CD4-positive, alpha-beta memory T cell (primary cell): ENCODE measurements at regions of chr12 and their contacts with region 1.

Region 1: DNA sequence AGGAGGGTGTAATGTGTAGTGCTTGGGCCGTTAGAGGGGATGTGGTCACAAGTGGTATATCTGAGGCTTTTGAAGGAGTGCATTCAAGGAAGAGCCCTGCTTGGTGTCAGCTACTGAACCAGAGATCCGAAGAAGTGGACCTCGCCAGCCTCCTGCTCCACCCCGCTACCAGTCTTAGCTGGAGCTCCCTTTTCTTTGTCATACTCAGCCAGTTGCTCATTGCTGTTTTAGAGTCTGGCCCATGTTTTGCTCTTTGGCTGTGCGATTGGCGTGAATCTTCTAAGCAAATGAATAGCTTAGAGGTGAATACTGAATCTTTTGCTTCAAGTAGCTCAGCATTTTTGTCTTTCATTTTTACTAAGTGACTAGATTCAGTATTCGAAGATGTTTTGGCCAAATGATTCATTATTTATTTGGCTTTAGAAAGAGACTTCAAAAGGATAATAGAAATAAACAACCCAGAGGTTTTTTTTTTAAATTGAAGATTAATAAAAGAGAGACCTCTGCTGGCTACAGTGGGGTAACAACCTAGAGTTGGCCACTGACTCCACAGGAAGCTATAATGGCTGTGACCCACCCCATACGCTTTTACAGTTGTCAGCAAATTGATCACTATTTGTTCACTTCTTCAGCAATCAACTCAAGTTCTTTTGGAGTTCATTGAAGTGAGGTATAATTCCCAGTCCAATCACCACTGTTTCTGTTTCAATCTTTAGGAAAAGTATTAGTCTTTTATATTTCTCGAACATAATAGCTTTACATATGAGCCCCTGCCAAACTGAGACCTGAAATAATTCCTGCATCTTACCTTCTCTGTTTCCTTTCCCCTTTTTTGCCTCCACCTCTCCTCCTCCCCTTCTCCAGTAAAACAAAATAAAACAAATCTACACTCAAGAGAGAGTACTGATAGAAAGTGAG is 19.9 kb downstream of the CDKN1B start:
- DNase-seq: peak; percentile 61 to 70 (median 64)
- H3K4me3 ChIP-seq: peak overlapping the region in 1 of 2 donors; percentile 46
- H3K4me3 Mint-ChIP-seq: peak overlapping the region; percentile 67 to 88 (median 76)
- H3K27ac ChIP-seq: peak overlapping the region; percentile 76
- H3K27ac Mint-ChIP-seq: peak overlapping the region; percentile 88 to 93 (median 93)
- H3K4me1 ChIP-seq: peaks cover 55% of the 10 kb centered on the region
- H3K4me1 Mint-ChIP-seq: peaks cover 24 to 59% (median 41%) of the 10 kb centered on the region in 4 donors
- H3K27me3 ChIP-seq: no peaks in the 10 kb centered on the region
- H3K27me3 Mint-ChIP-seq: no peaks in the 10 kb centered on the region

Region 2: DNA sequence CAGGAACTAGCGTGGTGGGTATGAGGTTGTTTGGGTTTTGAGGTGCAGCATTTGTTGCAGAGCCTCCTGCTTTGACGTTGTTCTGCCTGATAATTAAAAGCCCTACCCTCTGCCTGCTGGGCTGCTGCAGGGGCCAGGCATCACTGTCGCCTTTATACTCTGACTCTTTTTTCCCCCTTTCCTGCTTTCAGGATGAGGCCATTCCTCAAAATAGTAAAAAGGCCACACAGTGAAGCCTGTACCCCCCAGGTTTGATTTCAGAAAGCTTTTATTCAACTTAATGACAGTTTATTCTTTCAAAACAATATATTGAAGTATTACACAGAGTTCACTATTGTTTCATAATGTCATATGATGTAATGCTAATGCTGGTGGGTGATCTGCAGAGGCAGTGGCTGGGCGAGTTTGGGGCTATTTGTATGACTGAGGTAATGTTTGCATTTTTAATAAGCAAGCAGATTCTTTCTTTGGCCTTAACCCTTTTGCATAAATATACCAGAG is 371.0 kb before region 1 on chr12:
- CTCF ChIA-PET with region 1: interaction called, 16 read pairs
- POLR2A ChIA-PET with region 1: interaction called, 86 read pairs
- intact Hi-C with region 1: no loop called
- DNase-seq: no peak
- H3K4me3 ChIP-seq: no peak overlapping the region
- H3K4me3 Mint-ChIP-seq: peak overlapping the region in 5 of 8 donors; percentile 9 to 21 (median 14)
- H3K27ac ChIP-seq: no peak overlapping the region
- H3K27ac Mint-ChIP-seq: peak overlapping the region in 4 of 7 donors; percentile 31 to 75 (median 45)
- H3K4me1 ChIP-seq: peaks cover 39% of the 10 kb centered on the region
- H3K4me1 Mint-ChIP-seq: peaks cover 45 to 56% (median 50%) of the 10 kb centered on the region in 4 donors
- H3K27me3 ChIP-seq: no peaks in the 10 kb centered on the region
- H3K27me3 Mint-ChIP-seq: no peaks in the 10 kb centered on the region

Region 3: DNA sequence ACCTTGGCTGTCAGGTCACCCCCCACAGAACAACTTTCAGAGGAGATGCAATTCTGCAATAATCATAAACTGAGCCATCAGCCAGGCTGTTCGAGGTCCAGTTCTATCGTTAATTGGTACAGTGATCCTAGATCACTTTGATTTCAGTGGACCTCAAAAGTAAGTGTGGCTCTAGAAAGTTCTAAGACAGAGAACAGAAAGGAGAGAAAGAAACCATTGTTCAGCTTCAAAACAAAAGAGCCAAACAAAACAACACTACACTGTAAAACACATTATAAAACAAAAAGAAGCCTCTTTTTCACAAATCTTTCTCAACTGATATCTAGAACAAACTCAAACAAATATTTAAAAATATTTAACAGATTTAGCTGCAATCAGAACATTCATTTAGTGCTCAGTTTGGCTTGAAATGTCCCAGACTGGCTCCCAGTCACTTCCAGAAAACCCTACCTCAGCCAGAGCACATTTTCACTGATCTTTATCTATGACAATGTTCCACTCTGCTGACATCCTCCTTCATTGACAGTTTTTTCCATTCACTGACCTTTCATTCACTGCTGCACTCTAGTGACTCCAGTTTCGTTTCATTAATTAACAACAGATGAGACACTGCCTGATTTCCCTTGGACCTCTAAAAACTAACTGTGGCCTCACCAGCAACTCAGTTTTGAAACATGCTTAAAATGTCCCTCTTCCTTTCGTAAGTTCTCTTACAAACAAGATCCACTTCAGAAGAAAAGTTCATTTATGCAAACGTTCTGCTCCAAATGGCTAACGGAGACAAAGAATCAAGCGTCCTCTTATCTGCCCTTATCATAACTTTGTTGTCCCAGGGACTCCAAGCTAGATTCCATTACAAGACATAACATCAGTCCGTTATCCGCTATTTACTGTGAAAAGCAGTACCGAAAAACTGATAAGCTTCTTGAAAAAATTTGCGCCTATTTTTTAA is 231.2 kb before region 1 on chr12:
- CTCF ChIA-PET with region 1: interaction called, 16 read pairs
- POLR2A ChIA-PET with region 1: interaction called, 7 read pairs
- intact Hi-C with region 1: loop called (anchors 2 kb)
- DNase-seq: peak in 4 of 5 donors; percentile 28 to 42 (median 32)
- H3K4me3 ChIP-seq: no peak overlapping the region
- H3K4me3 Mint-ChIP-seq: peak overlapping the region in 7 of 8 donors; percentile 37 to 84 (median 73)
- H3K27ac ChIP-seq: peak overlapping the region; percentile 48
- H3K27ac Mint-ChIP-seq: peak overlapping the region; percentile 66 to 95 (median 90)
- H3K4me1 ChIP-seq: peaks cover 65% of the 10 kb centered on the region
- H3K4me1 Mint-ChIP-seq: peaks cover 53 to 77% (median 61%) of the 10 kb centered on the region in 4 donors
- H3K27me3 ChIP-seq: no peaks in the 10 kb centered on the region
- H3K27me3 Mint-ChIP-seq: no peaks in the 10 kb centered on the region

Region 4: GRCh38 chr12:12622418-12622817 is 114.6 kb before region 1 on chr12:
- CTCF ChIA-PET with region 1: interaction called, 10 read pairs
- POLR2A ChIA-PET with region 1: interaction called, 7 read pairs
- intact Hi-C with region 1: no loop called
- DNase-seq: peak; percentile 42 to 81 (median 71)
- H3K4me3 ChIP-seq: peak overlapping the region; percentile 9 to 21
- H3K4me3 Mint-ChIP-seq: peak overlapping the region; percentile 56 to 84 (median 72)
- H3K27ac ChIP-seq: peak overlapping the region; percentile 36
- H3K27ac Mint-ChIP-seq: peak overlapping the region; percentile 74 to 95 (median 90)
- H3K4me1 ChIP-seq: peaks cover 87% of the 10 kb centered on the region
- H3K4me1 Mint-ChIP-seq: peaks cover 62 to 100% (median 74%) of the 10 kb centered on the region in 4 donors
- H3K27me3 ChIP-seq: no peaks in the 10 kb centered on the region
- H3K27me3 Mint-ChIP-seq: no peaks in the 10 kb centered on the region

Region 5: GRCh38 chr12:12696562-12697383 is 40.2 kb before region 1 on chr12:
- CTCF ChIA-PET with region 1: interaction called, 28 read pairs
- POLR2A ChIA-PET with region 1: interaction called, 45 read pairs
- intact Hi-C with region 1: loop called (anchors 1 kb)
- DNase-seq: peak; percentile 93 to 96 (median 95)
- H3K4me3 ChIP-seq: peak overlapping the region; percentile 37 to 74
- H3K4me3 Mint-ChIP-seq: peak overlapping the region; percentile 86 to 97 (median 94)
- H3K27ac ChIP-seq: peak overlapping the region; percentile 87
- H3K27ac Mint-ChIP-seq: peak overlapping the region; percentile 98 to 100 (median 100)
- H3K4me1 ChIP-seq: peaks cover 24% of the 10 kb centered on the region
- H3K4me1 Mint-ChIP-seq: peaks cover 16 to 41% (median 30%) of the 10 kb centered on the region in 4 donors
- H3K27me3 ChIP-seq: no peaks in the 10 kb centered on the region
- H3K27me3 Mint-ChIP-seq: no peaks in the 10 kb centered on the region

Region 6: GRCh38 chr12:12724661-12725545 is 12.1 kb before region 1 on chr12:
- CTCF ChIA-PET with region 1: interaction called, 104 read pairs
- POLR2A ChIA-PET with region 1: interaction called, 643 read pairs
- intact Hi-C with region 1: loop called (anchors 1 kb)
- DNase-seq: peak; percentile 93 to 97 (median 96)
- H3K4me3 ChIP-seq: peak overlapping the region in 1 of 2 donors; percentile 80
- H3K4me3 Mint-ChIP-seq: peak overlapping the region; percentile 89 to 96 (median 92)
- H3K27ac ChIP-seq: peak overlapping the region; percentile 95
- H3K27ac Mint-ChIP-seq: peak overlapping the region; percentile 95 to 99 (median 97)
- H3K4me1 ChIP-seq: peaks cover 56% of the 10 kb centered on the region
- H3K4me1 Mint-ChIP-seq: peaks cover 37 to 72% (median 43%) of the 10 kb centered on the region in 4 donors
- H3K27me3 ChIP-seq: no peaks in the 10 kb centered on the region
- H3K27me3 Mint-ChIP-seq: peaks cover 0 to 1% of the 10 kb centered on the region in 2 donors

Region 7: DNA sequence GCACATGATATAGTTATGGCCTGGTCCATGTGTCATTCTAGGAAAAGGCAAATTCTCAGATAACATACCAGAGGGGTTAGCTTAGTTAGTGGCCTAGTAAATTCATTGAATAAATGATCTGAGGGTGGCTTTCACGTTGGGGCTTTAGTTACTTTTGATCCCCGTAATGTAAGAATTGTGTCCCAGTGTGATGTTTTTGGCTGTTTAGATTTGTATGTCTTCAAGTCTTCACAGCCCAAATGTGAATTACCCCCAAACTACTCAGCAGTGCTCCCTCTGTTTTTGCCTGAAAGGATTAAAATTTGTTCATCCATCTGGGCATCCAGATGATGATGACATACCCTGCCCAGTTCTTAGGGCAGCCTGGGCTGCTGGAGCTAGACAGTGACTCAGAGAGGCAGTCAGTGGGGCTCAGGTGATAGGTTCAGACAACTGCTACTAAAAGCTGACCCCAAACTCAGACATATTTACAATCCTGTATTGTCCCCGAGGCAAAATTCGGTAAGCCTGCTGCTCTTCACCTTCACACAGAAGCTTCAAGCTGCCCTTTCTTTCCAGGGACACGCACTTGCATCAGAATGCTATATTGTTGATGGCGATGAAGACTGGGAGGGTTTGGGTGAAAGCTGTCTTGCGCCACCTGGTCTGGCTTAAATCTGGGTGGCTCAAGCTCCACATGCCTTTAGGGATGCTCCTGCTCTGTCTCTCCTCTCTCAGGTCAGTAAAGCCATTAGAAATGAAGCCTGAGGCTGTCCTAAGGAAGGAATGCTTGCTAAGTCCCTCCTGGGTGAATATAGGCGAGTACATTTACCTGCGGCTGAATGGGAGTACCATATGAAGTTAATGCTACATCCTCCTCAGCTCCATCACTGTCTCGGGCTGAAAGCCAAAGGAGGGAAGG is 204.7 kb after region 1 on chr12:
- CTCF ChIA-PET with region 1: no interaction called
- POLR2A ChIA-PET with region 1: no interaction called
- intact Hi-C with region 1: no loop called
- DNase-seq: no peak
- H3K4me3 ChIP-seq: no peak overlapping the region
- H3K4me3 Mint-ChIP-seq: no peak overlapping the region
- H3K27ac ChIP-seq: no peak overlapping the region
- H3K27ac Mint-ChIP-seq: no peak overlapping the region
- H3K4me1 ChIP-seq: no peaks in the 10 kb centered on the region
- H3K4me1 Mint-ChIP-seq: no peaks in the 10 kb centered on the region
- H3K27me3 ChIP-seq: no peaks in the 10 kb centered on the region
- H3K27me3 Mint-ChIP-seq: peaks cover 4% of the 10 kb centered on the region in 2 donors